GM12878 (cell line): ENCODE measurements at regions of chr4 and their contacts with region 1.

Region 1: DNA sequence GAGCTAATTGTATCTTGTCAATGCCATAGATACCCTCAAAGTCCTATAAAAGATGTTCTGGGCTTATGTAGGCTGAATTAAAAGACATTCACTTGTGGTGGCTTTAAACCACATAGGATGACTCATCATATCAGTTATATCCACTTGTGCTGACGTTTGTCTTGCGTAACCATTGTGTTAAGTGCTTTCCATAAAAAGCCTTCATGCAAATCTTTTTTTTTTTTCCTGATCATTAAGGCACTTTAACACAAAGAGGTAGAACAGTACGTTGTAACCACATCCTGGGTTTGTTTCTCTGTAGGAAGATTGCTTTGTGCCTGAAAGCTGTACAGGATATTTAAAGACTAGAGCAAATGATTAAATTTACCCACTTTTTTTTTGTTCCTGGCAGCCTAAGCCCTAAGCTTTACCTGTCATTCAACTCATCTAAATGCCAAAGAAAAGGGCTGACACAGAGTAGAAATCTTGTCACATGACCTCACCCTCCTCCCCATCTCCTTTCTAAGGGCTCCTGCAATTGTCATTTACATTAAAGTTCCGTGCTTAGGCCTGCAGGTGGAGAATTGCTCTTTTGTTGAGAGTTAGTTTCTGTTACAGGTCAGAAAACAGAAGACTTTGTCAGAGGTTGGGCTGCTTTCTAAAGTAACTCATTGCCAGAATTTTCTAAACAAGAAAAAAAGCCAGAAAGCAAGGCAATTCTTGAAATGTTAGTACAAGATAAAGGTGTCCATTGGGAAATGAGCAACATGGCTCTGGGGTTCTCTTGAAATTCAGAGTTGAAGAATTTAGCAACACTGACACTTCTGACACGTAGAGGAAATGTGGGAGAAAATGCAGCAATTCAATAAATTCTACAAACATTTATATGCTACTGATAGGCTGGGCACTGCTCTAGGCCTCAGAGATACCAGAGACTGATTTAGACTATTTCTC is 555.6 kb downstream of the PPARGC1A start:
- DNase-seq: peak; percentile 39
- ATAC-seq: peak; percentile 91
- H3K4me3 ChIP-seq: no peak overlapping the region
- H3K27ac ChIP-seq: peak overlapping the region; percentile 22; the same call in 1 of the 2 replicates
- H3K4me1 ChIP-seq: no peaks in the 10 kb centered on the region
- H3K27me3 ChIP-seq: no peaks in the 10 kb centered on the region
- CTCF ChIP-seq: peak in 2 of 3 experiments; percentile 15 to 42; a peak in 1 of 6 replicates
- EP300 ChIP-seq: peak; percentile 98
- POLR2A ChIP-seq: no peak
- RAD21 ChIP-seq: peak; percentile 64

Region 2: DNA sequence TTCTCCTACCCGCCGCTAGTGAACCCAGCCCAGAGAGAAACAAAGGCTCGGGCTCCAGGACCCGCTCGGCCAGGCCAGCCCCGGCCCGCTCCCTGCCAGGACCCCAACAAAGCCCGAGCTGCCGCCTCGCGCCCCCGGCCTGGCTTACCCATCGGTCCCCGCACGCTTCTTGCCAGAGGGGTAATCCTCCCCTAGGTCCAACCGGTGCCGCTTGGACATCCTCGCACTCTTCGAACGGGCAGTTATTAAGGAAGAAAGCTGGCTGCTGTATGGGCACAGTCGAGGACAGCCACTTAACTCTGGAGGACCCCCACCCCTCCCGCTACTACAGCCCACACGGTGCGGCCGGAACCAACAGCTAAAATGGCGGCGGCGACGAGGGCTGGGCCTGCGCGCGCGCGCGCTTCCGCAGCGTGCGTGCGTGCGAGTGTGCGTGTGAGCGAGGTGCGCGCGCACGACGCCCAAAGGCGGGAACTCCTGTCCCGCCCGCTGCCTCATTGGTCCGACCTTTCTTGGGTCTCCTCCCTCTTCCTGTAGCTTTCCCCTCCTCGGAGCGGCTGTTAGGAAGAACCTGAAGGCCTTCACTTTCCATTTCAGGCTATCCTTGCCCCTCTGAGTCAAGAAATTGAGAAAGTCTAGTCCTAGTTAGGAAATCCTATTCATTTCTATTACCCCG is 1250.1 kb after region 1 on chr4 and contains the start of gene DHX15:
- CTCF ChIA-PET with region 1: no interaction called
- POLR2A ChIA-PET with region 1: no interaction called
- RAD21 ChIA-PET with region 1: no interaction called
- SMC1A ChIA-PET with region 1: no interaction called
- in situ Hi-C with region 1: loop called (anchors 25 kb)
- intact Hi-C with region 1: no loop called
- DNase-seq: peak; percentile 86
- ATAC-seq: peak; percentile 88
- H3K4me3 ChIP-seq: peak within 1 kb of the TSS; percentile 70
- H3K27ac ChIP-seq: peak within 1 kb of the TSS; percentile 89
- H3K4me1 ChIP-seq: peaks cover 12% of the 10 kb centered on the region
- H3K27me3 ChIP-seq: no peaks in the 10 kb centered on the region
- CTCF ChIP-seq: no peak
- EP300 ChIP-seq: no peak
- POLR2A ChIP-seq: peak; percentile 93
- RAD21 ChIP-seq: no peak
- polyA plus RNA-seq, gene DHX15: 177 to 181 TPM